WTC11 (cell line): ENCODE measurements at regions of chr16 and their contacts with region 1.

Region 1: GRCh38 chr16:75251280-75252048 is at the start of gene BCAR1:
- DNase-seq: peak; percentile 93
- ATAC-seq: peak; percentile 63
- H3K4me3 Mint-ChIP-seq: peak within 1 kb of the TSS; percentile 79
- H3K27ac Mint-ChIP-seq: peak within 1 kb of the TSS; percentile 97
- H3K4me1 Mint-ChIP-seq: peaks cover 83% of the 10 kb centered on the region
- H3K27me3 Mint-ChIP-seq: no peaks in the 10 kb centered on the region
- CTCF ChIP-seq: no peak
- total RNA-seq, gene BCAR1: 87.3 to 95.6 TPM (median 88.6 TPM) in 3 replicates

Region 2: DNA sequence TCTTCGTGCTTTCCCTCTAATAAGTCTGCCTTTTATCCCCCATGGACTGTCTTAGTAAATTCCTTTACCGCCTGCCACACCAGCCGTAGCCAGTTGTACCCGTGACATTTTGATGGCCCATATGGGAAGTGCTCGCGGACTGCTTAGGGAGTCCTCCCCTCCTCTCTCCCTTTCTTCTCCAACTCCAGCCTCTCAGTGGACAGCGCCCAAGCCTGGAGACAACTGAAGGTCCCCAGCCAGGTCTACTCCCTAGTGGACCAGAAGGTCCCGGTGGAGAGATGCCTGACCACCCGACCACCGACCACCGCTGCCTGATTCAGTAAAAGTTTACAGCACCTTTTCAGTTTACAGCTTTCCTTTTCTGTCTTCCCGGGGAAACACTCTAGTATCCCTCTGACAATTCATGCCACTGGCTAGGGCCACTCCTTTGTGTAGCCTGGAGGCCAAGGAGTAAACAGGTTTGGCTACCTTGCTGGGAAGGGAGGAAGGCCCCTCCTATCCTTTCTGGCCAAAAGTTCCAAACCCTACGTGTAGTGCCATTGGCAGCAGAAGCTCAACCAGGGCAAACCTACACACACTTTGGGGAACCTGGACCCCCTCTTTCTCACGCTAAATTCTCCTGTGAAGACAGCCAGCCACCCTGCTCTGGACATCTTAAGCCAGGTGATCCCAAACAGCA is 62.5 kb before region 1 on chr16:
- CTCF ChIA-PET with region 1: no interaction called
- POLR2A ChIA-PET with region 1: no interaction called
- DNase-seq: no peak
- ATAC-seq: no peak
- H3K4me3 Mint-ChIP-seq: no peak overlapping the region
- H3K27ac Mint-ChIP-seq: no peak overlapping the region
- H3K4me1 Mint-ChIP-seq: no peaks in the 10 kb centered on the region
- H3K27me3 Mint-ChIP-seq: no peaks in the 10 kb centered on the region; the same call in 1 of the 2 replicates
- CTCF ChIP-seq: no peak

Region 3: DNA sequence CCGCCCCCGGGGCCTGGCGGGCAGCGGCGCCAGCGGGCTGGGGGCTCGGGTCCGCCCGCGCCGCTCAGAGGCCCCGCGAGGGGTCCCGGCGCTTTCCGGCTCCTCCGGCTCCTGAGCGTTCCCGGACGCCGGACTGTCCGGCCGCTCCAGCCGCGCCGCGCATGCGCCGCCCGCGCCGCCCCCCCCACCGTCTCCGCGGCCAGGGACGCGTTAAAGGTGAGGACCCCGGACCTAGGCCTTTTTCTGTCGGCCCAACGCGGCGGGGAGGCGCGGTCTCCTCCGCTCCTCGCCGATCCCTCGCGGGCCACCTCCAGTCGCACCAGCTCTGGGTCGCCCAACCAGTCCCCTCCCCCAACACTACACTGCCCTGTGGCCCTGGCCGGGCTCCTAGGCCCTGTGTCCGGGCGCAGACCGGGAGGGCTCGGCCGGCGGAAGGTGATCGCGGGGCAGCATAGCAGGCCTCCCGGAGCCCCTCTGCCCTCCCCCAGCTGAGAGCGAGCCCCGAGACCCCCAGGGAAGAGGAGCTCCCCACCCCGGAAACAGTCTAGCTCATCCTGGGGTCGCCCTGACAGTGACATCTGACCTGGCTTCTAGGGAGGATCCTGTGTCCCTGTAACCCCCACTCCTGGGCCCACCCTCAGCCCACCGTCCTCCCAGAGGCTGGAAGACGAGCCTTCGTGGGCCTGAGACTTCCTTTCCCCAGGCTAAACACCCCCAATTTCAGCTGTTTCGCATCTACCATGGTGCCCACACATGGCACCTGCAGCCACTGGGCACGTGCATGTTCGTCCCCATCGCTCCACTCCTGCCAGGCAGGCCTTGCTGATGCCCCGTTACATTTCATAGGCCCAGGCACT is 14.6 kb after region 1 on chr16:
- CTCF ChIA-PET with region 1: interaction called, 6 read pairs
- POLR2A ChIA-PET with region 1: interaction called, 57 read pairs
- DNase-seq: peak; percentile 90
- ATAC-seq: peak; percentile 78
- H3K4me3 Mint-ChIP-seq: peak overlapping the region; percentile 74
- H3K27ac Mint-ChIP-seq: peak overlapping the region; percentile 90
- H3K4me1 Mint-ChIP-seq: peaks cover 39% of the 10 kb centered on the region
- H3K27me3 Mint-ChIP-seq: no peaks in the 10 kb centered on the region
- CTCF ChIP-seq: no peak

Region 4: DNA sequence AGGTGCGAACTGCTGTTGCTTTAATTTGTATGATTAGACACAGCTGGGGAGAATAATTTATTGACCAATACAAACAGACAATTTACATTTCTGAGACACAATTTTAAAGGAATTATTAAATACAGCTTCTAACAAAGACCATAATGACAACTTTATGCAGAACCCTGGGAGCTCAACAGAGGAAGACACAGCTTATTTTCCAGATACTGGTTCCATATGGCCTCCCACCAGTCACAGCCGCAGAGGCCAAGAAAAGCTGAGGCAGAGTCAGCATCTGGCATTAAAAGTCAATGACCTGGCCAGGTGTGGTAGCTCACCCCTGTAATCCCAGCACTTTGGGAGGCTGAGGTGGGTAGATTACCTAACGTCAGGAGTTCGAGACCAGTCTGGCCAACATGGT is 66.1 kb after region 1 on chr16:
- CTCF ChIA-PET with region 1: no interaction called
- POLR2A ChIA-PET with region 1: no interaction called
- DNase-seq: no peak
- ATAC-seq: no peak
- H3K4me3 Mint-ChIP-seq: no peak overlapping the region
- H3K27ac Mint-ChIP-seq: no peak overlapping the region
- H3K4me1 Mint-ChIP-seq: peaks cover 3% of the 10 kb centered on the region; the same call in 1 of the 2 replicates
- H3K27me3 Mint-ChIP-seq: no peaks in the 10 kb centered on the region
- CTCF ChIP-seq: no peak